ENCODE measurements at regions of chr7 and their contacts with region 1.

Region 1: DNA sequence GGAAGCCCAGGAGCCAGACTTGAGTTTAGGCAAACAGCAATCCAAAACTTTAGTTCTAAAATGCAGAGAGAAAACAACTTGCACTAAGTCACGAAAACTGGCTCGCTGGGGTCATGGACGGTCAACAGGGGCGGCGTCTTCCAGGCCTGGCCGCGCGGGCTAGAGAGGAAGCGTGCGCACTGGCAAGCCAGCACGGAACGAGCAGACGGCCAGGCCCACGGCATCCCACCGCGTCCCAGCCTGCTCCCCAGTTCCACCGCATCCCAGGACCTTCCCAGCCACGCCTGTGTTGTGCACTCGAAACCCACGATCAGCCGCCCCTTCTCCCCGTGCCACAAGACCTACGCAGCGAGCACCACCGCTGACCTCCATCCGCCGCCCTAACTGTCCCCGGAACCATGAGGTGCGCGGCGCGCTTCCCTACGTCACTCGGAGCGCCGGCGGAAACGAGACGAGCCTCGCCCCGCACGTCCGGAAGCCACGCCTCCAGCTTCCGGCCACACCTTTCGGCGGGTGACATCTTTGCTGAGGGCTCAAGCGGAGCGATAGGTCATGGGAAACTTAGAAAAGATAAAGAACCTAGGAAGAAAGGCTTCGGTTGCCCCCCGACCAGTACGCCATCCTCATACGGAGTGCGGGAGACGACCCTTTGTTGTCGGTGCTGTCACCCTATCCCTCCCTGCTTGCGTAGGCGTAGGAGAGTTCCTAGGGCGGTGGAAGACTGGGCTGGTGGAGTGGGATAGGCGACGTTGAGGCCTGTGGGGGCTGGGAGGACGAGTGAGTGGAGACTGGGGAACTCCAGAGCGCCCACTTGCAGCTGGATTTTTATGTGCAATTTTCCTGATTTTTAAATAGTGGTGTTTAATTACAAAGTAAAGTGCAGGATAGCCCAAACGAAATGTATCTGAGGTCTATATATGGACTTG is at the start of gene TBRG4:
- DNase-seq: peak; percentile 94
- H3K4me3 Mint-ChIP-seq: peak within 1 kb of the TSS; percentile 96
- H3K27ac Mint-ChIP-seq: peak within 1 kb of the TSS; percentile 97
- H3K4me1 Mint-ChIP-seq: peaks cover 39% of the 10 kb centered on the region
- H3K27me3 Mint-ChIP-seq: peaks cover 12% of the 10 kb centered on the region
- total RNA-seq, gene TBRG4: 176 and 195 TPM in 2 replicates

Region 2: GRCh38 chr7:44581879-44582603 is 529.5 kb before region 1 on chr7 and contains the start of gene TMED4:
- intact Hi-C with region 1: loop called (anchors 2 kb)
- DNase-seq: peak; percentile 100
- H3K4me3 Mint-ChIP-seq: peak within 1 kb of the TSS; percentile 93
- H3K27ac Mint-ChIP-seq: peak within 1 kb of the TSS; percentile 93
- H3K4me1 Mint-ChIP-seq: peaks cover 33% of the 10 kb centered on the region
- H3K27me3 Mint-ChIP-seq: no peaks in the 10 kb centered on the region
- total RNA-seq, gene TMED4: 74.9 and 79.6 TPM in 2 replicates

Region 3: DNA sequence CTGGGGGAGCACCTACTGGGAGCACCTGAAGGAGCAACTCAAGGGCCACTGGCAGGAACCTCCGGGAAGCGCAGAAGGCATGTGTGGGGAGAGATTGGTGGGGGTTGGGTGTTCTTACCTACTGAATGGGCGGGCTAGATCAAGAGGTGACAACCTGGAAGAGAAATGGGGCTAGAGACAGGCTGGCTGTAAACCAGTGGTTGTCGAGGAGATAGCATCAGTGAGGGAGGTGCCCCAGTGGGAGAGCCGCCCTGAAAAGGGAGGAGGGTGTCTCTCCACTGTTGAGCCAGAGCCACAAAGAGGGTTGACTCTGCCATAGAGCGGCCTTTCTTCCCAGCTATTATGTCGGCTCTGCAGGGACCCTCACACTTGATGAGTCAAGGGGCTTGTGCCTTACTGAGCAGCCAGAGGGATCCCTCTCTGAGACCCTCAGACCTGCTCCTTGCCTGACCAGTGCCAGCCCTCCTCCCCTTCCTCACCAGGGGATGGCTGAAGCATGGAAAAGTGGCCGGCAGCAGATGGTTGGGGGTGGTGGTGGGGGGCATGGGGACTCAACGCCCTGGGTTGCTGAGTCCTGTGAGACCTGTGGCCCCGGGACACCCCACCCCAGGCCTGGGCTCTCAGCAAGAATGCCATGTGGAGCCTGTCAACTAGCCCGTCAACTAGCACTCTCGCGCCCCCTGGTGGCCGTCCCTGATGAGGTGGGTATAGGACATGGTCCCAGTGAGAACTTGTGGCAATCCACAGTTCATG is 189.8 kb before region 1 on chr7:
- intact Hi-C with region 1: loop called (anchors 2 kb)
- DNase-seq: peak; percentile 86
- H3K4me3 Mint-ChIP-seq: no peak overlapping the region
- H3K27ac Mint-ChIP-seq: peak overlapping the region; percentile 79
- H3K4me1 Mint-ChIP-seq: peaks cover 15% of the 10 kb centered on the region
- H3K27me3 Mint-ChIP-seq: peaks cover 7% of the 10 kb centered on the region

Region 4: GRCh38 chr7:44986218-44987053 is 125.1 kb before region 1 on chr7:
- intact Hi-C with region 1: loop called (anchors 1 kb)
- DNase-seq: peak; percentile 96
- H3K4me3 Mint-ChIP-seq: peak overlapping the region; percentile 98
- H3K27ac Mint-ChIP-seq: peak overlapping the region; percentile 99
- H3K4me1 Mint-ChIP-seq: peaks cover 64% of the 10 kb centered on the region
- H3K27me3 Mint-ChIP-seq: no peaks in the 10 kb centered on the region

Region 5: DNA sequence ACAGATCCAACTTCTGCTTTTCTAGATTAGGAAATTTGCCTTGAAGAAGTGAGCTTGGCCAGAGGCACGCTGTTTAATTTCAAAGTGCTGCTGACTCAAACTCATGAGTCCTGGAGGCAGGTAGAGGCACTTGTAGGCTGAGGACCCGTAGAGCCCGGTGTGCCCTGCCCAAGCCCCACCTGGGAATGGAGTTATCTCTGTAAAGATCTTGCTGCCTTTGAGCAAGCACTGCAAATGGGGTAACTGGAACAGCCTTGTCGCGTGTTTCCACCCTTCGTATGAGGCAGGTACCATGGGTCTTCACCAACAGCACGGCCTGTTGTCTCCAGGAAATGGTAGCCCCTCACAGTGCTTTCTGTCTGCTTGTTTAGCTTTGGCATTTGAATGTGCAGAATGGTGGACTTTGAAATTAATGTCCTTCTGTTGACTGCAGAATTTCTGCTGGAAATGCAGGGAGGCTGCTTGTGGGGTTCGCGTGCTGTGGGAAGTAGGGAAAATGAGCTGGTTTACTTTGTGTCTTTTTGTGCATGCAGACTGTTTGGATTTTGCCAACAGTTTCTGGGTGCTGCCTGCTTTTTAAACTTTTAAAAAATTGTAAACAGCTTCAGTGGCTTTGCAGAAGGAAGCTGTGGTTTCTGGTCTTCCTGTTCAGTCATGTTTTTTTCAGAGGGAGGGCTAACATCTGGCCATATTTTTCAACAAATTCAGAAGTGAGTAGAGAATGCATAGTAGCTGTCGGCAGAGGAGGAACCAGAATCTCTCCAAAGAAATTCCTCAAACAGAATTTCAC is 84.4 kb before region 1 on chr7:
- intact Hi-C with region 1: loop called (anchors 1 kb)
- DNase-seq: peak; percentile 42
- H3K4me3 Mint-ChIP-seq: peak overlapping the region; percentile 92
- H3K27ac Mint-ChIP-seq: peak overlapping the region; percentile 93
- H3K4me1 Mint-ChIP-seq: peaks cover 72% of the 10 kb centered on the region
- H3K27me3 Mint-ChIP-seq: no peaks in the 10 kb centered on the region

Region 6: GRCh38 chr7:45136106-45137060 is 24.8 kb after region 1 on chr7:
- intact Hi-C with region 1: loop called (anchors 1 kb)
- DNase-seq: peak; percentile 55
- H3K4me3 Mint-ChIP-seq: no peak overlapping the region
- H3K27ac Mint-ChIP-seq: no peak overlapping the region
- H3K4me1 Mint-ChIP-seq: peaks cover 19% of the 10 kb centered on the region
- H3K27me3 Mint-ChIP-seq: peaks cover 10% of the 10 kb centered on the region

Measured in activated T-helper 1 cell treated with anti-CD3 and anti-CD28 coated beads, Interleukin-12 subunit alpha, Interleukin-12 subunit beta, Interleukin-2, Interleukin-4 antibody, amounts not matched to agents 30 ng/mL and 10 ng/mL and 1 ng/mL, durations not matched to agents 14 hours and 24 hours and 36 hours (primary cell).